Caco-2 (cell line): ENCODE measurements at regions of chr11 and their contacts with region 1.

Region 1: GRCh38 chr11:77776455-77776854 is 44.1 kb downstream of the RSF1 start:
- DNase-seq: peak in 1 of 2 experiments; percentile 46
- H3K4me3 ChIP-seq: no peak overlapping the region
- H3K4me3 Mint-ChIP-seq: no peak overlapping the region
- H3K27ac Mint-ChIP-seq: no peak overlapping the region
- H3K4me1 ChIP-seq: peaks cover 21% of the 10 kb centered on the region
- H3K4me1 Mint-ChIP-seq: peaks cover 34% of the 10 kb centered on the region
- H3K27me3 ChIP-seq: no peaks in the 10 kb centered on the region
- H3K27me3 Mint-ChIP-seq: no peaks in the 10 kb centered on the region
- CTCF ChIP-seq: peak; percentile 49 to 73

Region 2: GRCh38 chr11:77473801-77474683 is 302.4 kb before region 1 on chr11 and contains the start of gene PAK1:
- CTCF ChIA-PET with region 1: no interaction called
- POLR2A ChIA-PET with region 1: no interaction called
- intact Hi-C with region 1: no loop called
- DNase-seq: peak; percentile 98 to 99
- H3K4me3 ChIP-seq: peak within 1 kb of the TSS; percentile 93
- H3K4me3 Mint-ChIP-seq: peak within 1 kb of the TSS; percentile 93
- H3K27ac Mint-ChIP-seq: peak within 1 kb of the TSS; percentile 96
- H3K4me1 ChIP-seq: peaks cover 34% of the 10 kb centered on the region
- H3K4me1 Mint-ChIP-seq: peaks cover 26% of the 10 kb centered on the region
- H3K27me3 ChIP-seq: no peaks in the 10 kb centered on the region
- H3K27me3 Mint-ChIP-seq: no peaks in the 10 kb centered on the region
- CTCF ChIP-seq: peak; percentile 58 to 86
- total RNA-seq, gene PAK1: 81.1 and 90.1 TPM in 2 replicates

Region 3: DNA sequence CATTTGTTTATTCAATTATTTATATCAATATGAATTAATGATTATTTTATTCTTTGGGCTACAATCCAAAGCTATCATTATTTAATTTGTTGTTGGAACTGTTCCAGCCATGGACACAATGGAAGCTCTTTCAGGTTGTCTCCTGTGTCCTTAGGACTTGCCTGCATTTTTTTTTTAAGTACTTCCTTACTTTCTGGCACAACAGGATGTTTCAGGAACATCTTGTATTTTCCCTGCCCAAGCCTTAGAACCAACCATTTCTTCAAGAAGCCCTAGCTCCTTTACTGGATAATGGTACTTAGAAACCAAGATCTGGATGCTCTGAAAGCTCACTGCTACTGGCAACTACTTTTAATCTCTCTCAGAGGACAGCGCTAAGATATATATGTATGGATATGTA is 81.0 kb before region 1 on chr11:
- CTCF ChIA-PET with region 1: no interaction called
- POLR2A ChIA-PET with region 1: no interaction called
- intact Hi-C with region 1: no loop called
- DNase-seq: no peak
- H3K4me3 ChIP-seq: no peak overlapping the region
- H3K4me3 Mint-ChIP-seq: no peak overlapping the region
- H3K27ac Mint-ChIP-seq: no peak overlapping the region
- H3K4me1 ChIP-seq: no peaks in the 10 kb centered on the region
- H3K4me1 Mint-ChIP-seq: no peaks in the 10 kb centered on the region
- H3K27me3 ChIP-seq: no peaks in the 10 kb centered on the region
- H3K27me3 Mint-ChIP-seq: no peaks in the 10 kb centered on the region
- CTCF ChIP-seq: no peak

Region 4: DNA sequence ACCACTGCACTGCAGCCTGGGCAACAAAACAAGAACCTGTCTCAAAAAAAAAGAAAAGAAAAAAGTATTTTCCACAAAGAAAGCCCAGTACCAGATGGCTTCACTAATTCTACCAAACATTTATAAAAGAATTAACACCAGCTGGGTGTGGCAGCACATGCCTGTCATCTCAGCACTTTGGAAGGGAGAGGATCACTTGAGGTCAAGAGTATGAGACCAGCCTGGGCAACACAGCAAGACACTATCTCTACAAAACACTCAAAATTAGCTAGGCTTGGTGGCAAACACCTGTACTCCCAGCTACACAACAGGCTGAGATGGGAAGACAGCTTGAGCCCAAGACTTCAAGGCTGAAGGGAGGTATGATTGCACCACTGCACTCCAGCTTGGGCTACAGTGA is 24.0 kb after region 1 on chr11:
- CTCF ChIA-PET with region 1: interaction called, 3 read pairs
- POLR2A ChIA-PET with region 1: no interaction called
- intact Hi-C with region 1: loop called (anchors 1 kb)
- DNase-seq: no peak
- H3K4me3 ChIP-seq: no peak overlapping the region
- H3K4me3 Mint-ChIP-seq: peak overlapping the region; percentile 64
- H3K27ac Mint-ChIP-seq: peak overlapping the region; percentile 94
- H3K4me1 ChIP-seq: peaks cover 39% of the 10 kb centered on the region
- H3K4me1 Mint-ChIP-seq: peaks cover 34% of the 10 kb centered on the region
- H3K27me3 ChIP-seq: no peaks in the 10 kb centered on the region
- H3K27me3 Mint-ChIP-seq: no peaks in the 10 kb centered on the region
- CTCF ChIP-seq: no peak

Region 5: GRCh38 chr11:77879218-77879617 is 102.8 kb after region 1 on chr11:
- CTCF ChIA-PET with region 1: no interaction called
- POLR2A ChIA-PET with region 1: no interaction called
- intact Hi-C with region 1: loop called (anchors 10 kb)
- DNase-seq: no peak
- H3K4me3 ChIP-seq: no peak overlapping the region
- H3K4me3 Mint-ChIP-seq: no peak overlapping the region
- H3K27ac Mint-ChIP-seq: no peak overlapping the region
- H3K4me1 ChIP-seq: no peaks in the 10 kb centered on the region
- H3K4me1 Mint-ChIP-seq: no peaks in the 10 kb centered on the region
- H3K27me3 ChIP-seq: no peaks in the 10 kb centered on the region
- H3K27me3 Mint-ChIP-seq: no peaks in the 10 kb centered on the region
- CTCF ChIP-seq: no peak

Region 6: DNA sequence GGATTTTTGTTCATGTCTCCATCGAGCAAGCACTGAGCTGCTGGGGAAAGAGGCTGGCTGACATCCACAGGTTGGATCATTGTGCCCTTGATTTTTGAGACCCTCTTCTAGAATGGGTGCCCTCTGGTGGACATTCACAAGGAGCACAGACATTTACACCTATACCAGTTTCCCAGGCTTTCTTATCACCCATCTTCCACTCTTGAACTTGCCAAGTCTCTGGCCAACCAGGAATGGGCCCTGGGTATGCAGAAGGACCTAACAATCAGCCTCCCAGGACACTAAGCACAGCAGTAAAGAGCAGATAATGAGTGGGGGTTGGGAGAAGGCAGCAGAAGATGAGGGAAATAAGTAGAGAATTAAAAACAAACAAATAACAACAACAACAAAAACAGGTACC is 223.7 kb after region 1 on chr11:
- CTCF ChIA-PET with region 1: interaction called, 11 read pairs
- POLR2A ChIA-PET with region 1: no interaction called
- intact Hi-C with region 1: loop called (anchors 1 kb)
- DNase-seq: peak; percentile 77 to 80
- H3K4me3 ChIP-seq: no peak overlapping the region
- H3K4me3 Mint-ChIP-seq: no peak overlapping the region
- H3K27ac Mint-ChIP-seq: no peak overlapping the region
- H3K4me1 ChIP-seq: peaks cover 10% of the 10 kb centered on the region
- H3K4me1 Mint-ChIP-seq: no peaks in the 10 kb centered on the region
- H3K27me3 ChIP-seq: no peaks in the 10 kb centered on the region
- H3K27me3 Mint-ChIP-seq: no peaks in the 10 kb centered on the region
- CTCF ChIP-seq: peak; percentile 89 to 91